ENCODE measurements at regions of chr11 and their contacts with region 1.

Region 1: GRCh38 chr11:29343465-29344333 is 673.1 kb downstream of the KCNA4 start:
- DNase-seq: peak; percentile 54
- H3K4me3 Mint-ChIP-seq: no peak overlapping the region
- H3K27ac Mint-ChIP-seq: no peak overlapping the region
- H3K4me1 Mint-ChIP-seq: no peaks in the 10 kb centered on the region
- H3K27me3 Mint-ChIP-seq: no peaks in the 10 kb centered on the region

Region 2: DNA sequence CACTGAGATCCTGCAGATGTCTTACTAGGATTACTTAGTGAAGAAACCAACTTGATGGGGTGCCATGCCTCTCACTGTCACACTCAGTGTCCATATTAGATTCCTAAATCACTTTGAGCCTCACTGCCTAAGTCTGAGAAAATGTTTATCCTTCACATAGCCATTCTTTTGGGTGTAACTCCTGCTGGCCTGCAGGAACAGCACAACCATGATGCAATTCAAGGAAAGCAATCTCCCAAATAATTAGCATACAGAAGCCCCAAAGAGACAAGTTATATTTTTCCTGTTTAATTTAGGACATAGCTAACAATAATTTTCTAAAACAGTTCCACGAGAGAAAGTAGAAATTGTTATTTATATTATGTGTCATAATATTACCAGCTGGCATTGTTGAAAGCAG is 17.7 kb after region 1 on chr11:
- CTCF ChIA-PET with region 1: no interaction called
- intact Hi-C with region 1: no loop called
- DNase-seq: no peak
- H3K4me3 Mint-ChIP-seq: no peak overlapping the region
- H3K27ac Mint-ChIP-seq: no peak overlapping the region
- H3K4me1 Mint-ChIP-seq: no peaks in the 10 kb centered on the region
- H3K27me3 Mint-ChIP-seq: no peaks in the 10 kb centered on the region

Region 3: DNA sequence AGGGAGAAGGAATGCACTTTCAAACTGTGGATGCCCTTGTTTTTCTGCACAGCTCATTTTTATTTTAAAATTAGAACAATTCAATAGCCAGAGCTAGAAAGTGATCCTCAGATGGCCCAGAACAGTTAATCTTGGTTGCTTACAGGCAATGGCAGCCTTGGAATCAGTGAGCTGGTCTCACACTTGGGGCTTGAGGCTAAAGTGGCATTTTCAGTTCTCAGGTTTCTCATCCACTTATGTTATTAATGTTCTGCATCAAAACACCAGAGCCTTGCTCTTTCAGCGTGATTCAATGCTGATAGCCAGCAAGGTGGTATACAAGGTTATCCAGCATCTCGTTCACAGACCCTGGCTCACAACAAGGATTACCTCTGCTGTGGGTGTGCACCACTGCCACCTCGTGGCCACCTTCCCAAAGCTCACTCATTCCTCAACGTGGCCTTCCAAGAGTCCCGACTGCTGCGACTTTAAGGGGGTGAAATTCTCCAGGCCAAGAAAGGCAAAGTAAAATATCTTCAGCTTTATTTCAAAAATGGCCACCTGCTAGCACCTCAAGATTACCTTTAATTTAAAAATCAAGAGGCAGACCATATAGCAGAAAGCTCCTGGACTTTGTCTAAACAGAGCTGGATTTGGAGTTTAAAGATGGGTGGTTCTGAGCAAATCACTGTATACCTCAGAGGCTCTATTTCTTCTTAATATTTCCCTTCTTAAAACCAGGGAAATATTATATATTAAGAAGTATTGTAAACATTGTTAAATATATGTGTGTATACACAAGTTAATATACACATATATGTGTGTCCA is 852.9 kb after region 1 on chr11:
- CTCF ChIA-PET with region 1: no interaction called
- intact Hi-C with region 1: loop called (anchors 5 kb)
- DNase-seq: peak; percentile 57
- H3K4me3 Mint-ChIP-seq: no peak overlapping the region
- H3K27ac Mint-ChIP-seq: no peak overlapping the region
- H3K4me1 Mint-ChIP-seq: no peaks in the 10 kb centered on the region
- H3K27me3 Mint-ChIP-seq: peaks cover 4% of the 10 kb centered on the region

Region 4: GRCh38 chr11:30358536-30358935 is 1014.8 kb after region 1 on chr11:
- CTCF ChIA-PET with region 1: no interaction called
- intact Hi-C with region 1: no loop called
- DNase-seq: no peak
- H3K4me3 Mint-ChIP-seq: no peak overlapping the region
- H3K27ac Mint-ChIP-seq: no peak overlapping the region
- H3K4me1 Mint-ChIP-seq: no peaks in the 10 kb centered on the region
- H3K27me3 Mint-ChIP-seq: peaks cover 11% of the 10 kb centered on the region

Region 5: DNA sequence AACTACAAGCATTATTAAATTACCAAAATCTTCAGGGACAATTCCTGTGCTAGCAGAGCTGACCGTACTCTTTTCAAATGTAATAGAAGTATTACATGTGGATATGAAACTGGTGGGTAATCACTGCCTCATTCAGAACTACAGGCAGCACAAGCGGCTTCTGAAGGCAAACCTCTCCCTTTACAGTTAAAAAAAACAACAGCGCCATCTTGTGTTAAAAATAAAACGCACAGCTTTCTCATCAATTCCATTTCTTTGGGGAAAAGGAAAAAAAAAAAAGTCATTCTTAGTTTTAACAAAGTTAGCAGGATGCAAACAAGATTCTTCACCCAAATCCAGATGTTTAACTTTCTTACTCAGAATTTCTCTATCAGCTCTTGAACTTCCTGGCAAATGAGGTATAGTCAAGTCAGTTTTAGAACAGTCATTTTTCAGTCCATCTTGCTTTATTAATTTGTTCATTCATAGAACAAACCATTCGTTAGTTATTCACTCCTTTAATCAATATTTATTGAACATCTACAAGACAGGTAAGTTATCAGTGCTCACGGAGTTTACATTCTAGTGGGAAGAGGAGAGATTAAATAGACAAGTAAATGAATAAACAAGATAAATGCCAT is 1574.3 kb after region 1 on chr11:
- CTCF ChIA-PET with region 1: no interaction called
- intact Hi-C with region 1: loop called (anchors 5 kb)
- DNase-seq: no peak
- H3K4me3 Mint-ChIP-seq: no peak overlapping the region
- H3K27ac Mint-ChIP-seq: no peak overlapping the region
- H3K4me1 Mint-ChIP-seq: no peaks in the 10 kb centered on the region
- H3K27me3 Mint-ChIP-seq: peaks cover 7% of the 10 kb centered on the region